ENCODE measurements at regions of chr14 and their contacts with region 1.

Region 1: DNA sequence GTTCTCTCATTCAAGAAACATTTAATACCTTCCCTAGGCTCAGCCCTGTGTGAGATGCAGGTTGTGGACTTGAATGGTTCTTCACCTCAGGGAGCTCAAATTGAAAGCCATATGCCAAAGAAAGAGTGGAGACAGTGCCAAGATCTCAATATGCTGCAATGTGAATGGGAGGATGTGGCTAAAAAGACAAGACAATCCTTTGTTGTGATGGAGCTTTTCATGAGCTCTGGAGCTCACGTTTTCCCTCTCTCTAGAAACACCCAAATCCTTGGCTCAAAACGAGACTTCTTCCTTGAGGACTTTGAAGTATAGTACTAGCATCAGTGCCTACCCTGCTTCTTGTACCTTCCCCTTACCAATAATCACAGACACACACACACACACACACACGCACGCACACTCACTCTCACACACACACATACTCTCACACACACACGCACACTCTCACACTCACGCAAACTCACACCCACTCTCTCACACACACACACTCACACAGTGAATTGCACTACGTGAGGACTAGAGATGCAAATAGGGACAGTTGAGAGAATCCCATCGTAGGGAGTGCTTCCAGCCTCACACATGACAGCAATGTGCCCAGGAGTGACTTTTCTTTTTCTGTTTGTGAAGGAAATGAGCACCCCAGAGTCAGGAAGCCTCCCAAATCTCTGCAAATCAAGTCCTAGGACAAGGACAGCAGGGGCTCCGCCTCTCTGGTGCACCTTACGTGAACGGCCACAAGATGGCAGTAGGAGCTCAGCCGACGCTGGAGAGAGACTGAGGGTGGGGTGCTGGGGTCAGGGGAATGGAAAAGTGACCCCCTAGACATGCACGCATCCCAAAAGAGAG is 231.4 kb downstream of the PCNX1 start:
- DNase-seq: peak; percentile 57 to 81
- ATAC-seq: peak; percentile 59 to 79 (median 61)
- H3K4me3 ChIP-seq: no peak overlapping the region
- H3K4me3 Mint-ChIP-seq: no peak overlapping the region
- H3K27ac ChIP-seq: no peak overlapping the region
- H3K27ac Mint-ChIP-seq: no peak overlapping the region
- H3K4me1 ChIP-seq: peaks cover 19% of the 10 kb centered on the region
- H3K4me1 Mint-ChIP-seq: peaks cover 5 to 17% of the 10 kb centered on the region in 2 donors
- H3K27me3 ChIP-seq: no peaks in the 10 kb centered on the region
- H3K27me3 Mint-ChIP-seq: peaks cover 0 to 4% of the 10 kb centered on the region in 2 donors
- CTCF ChIP-seq: peak; percentile 85

Region 2: GRCh38 chr14:71403656-71404055 is 265.0 kb after region 1 on chr14:
- intact Hi-C with region 1: loop called (anchors 10 kb)
- DNase-seq: peak in 1 of 2 donors; percentile 58
- ATAC-seq: peak; percentile 63 to 65 (median 64)
- H3K4me3 ChIP-seq: no peak overlapping the region
- H3K4me3 Mint-ChIP-seq: no peak overlapping the region
- H3K27ac ChIP-seq: no peak overlapping the region
- H3K27ac Mint-ChIP-seq: no peak overlapping the region
- H3K4me1 ChIP-seq: peaks cover 12% of the 10 kb centered on the region
- H3K4me1 Mint-ChIP-seq: peaks cover 7 to 15% of the 10 kb centered on the region in 2 donors
- H3K27me3 ChIP-seq: no peaks in the 10 kb centered on the region
- H3K27me3 Mint-ChIP-seq: no peaks in the 10 kb centered on the region
- CTCF ChIP-seq: peak; percentile 23

Region 3: GRCh38 chr14:71467361-71467811 is 328.7 kb after region 1 on chr14:
- intact Hi-C with region 1: no loop called
- DNase-seq: no peak
- ATAC-seq: no peak
- H3K4me3 ChIP-seq: no peak overlapping the region
- H3K4me3 Mint-ChIP-seq: no peak overlapping the region
- H3K27ac ChIP-seq: no peak overlapping the region
- H3K27ac Mint-ChIP-seq: no peak overlapping the region
- H3K4me1 ChIP-seq: no peaks in the 10 kb centered on the region
- H3K4me1 Mint-ChIP-seq: peaks cover 5 to 22% of the 10 kb centered on the region in 2 donors
- H3K27me3 ChIP-seq: no peaks in the 10 kb centered on the region
- H3K27me3 Mint-ChIP-seq: no peaks in the 10 kb centered on the region
- CTCF ChIP-seq: no peak

Region 4: DNA sequence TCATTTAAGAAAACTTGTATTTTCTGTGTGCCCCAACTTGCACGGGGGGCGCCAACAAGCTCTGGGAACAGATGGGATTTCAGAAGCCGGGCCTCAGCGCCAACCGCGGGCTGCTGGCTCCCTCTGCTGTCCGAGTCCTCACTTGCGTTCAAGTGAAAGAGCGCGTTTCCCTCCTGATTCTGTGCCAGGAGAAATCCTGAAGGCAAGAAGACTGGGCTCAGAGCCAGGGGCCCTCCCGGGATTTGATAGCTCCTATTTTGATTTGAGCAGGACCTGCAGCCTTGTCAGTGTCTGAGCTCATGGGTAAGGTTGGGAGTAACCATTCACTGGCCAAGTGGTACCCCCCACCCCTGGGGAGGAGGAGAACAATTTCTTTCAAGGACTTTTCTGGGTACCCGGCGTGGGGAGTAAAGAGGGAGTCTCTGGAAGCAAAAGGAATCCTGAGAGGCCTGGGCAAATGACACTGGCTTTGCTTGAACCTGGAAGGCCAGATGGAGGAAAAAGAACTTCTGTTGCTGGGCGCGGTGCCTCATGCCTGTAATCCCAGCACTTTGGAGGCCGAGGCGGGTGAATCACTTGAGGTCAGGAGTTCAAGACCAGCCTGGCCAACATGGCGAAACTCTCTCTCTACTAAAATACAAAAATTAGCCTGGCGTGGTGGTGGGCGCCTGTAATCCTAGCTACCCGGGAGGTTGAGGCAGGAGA is 614.6 kb after region 1 on chr14:
- intact Hi-C with region 1: loop called (anchors 1 kb)
- DNase-seq: peak; percentile 64 to 83
- ATAC-seq: peak; percentile 64 to 83 (median 72)
- H3K4me3 ChIP-seq: no peak overlapping the region
- H3K4me3 Mint-ChIP-seq: no peak overlapping the region
- H3K27ac ChIP-seq: no peak overlapping the region
- H3K27ac Mint-ChIP-seq: no peak overlapping the region
- H3K4me1 ChIP-seq: peaks cover 3% of the 10 kb centered on the region
- H3K4me1 Mint-ChIP-seq: peaks cover 0 to 4% of the 10 kb centered on the region in 2 donors
- H3K27me3 ChIP-seq: no peaks in the 10 kb centered on the region
- H3K27me3 Mint-ChIP-seq: peaks cover 0 to 2% of the 10 kb centered on the region in 2 donors
- CTCF ChIP-seq: peak; percentile 93

Region 5: DNA sequence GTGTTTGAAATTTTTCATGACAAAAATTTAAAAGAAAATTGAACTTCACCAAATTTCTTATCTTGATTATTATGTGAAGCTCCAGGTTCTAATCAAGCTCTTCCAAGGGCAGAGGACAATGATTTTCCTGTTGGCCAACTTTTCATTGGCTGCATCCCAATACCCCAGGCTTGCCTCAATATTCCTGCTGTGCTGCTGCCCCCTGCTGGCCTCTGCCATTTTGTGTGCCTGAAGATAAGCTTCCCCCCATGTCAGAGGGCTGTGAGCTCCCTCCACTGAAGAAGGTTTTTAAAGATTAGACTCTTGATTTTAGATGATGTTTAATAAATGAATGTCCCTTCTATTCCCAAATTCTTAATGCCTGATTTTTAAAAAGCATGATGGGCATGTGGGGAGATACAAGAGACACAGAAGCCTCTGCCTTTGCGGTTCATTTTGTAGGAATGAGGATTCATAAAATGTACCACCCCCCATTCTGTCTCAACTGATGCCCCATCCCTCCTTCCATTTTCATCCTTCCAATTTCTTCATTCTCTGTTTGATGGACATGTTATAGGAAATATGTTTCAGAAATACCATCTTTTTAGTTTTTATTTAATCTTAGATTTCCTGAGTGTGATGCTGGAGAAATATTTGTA is 716.8 kb after region 1 on chr14:
- intact Hi-C with region 1: loop called (anchors 2 kb)
- DNase-seq: peak in 1 of 2 donors; percentile 52
- ATAC-seq: peak in 1 of 3 donors; percentile 43
- H3K4me3 ChIP-seq: no peak overlapping the region
- H3K4me3 Mint-ChIP-seq: no peak overlapping the region
- H3K27ac ChIP-seq: no peak overlapping the region
- H3K27ac Mint-ChIP-seq: no peak overlapping the region
- H3K4me1 ChIP-seq: no peaks in the 10 kb centered on the region
- H3K4me1 Mint-ChIP-seq: peaks cover 5 to 6% of the 10 kb centered on the region in 2 donors
- H3K27me3 ChIP-seq: peaks cover 4% of the 10 kb centered on the region
- H3K27me3 Mint-ChIP-seq: peaks cover 10 to 40% of the 10 kb centered on the region in 2 donors
- CTCF ChIP-seq: peak; percentile 44